Activated CD8-positive, alpha-beta memory T cell treated with anti-CD3 and anti-CD28 coated beads, Interleukin-2, amount 10 ng/mL, durations not matched to agents 7 days and 5 days (primary cell): ENCODE measurements at regions of chr2 and their contacts with region 1.

Region 1: GRCh38 chr2:85642725-85643124 is 25.3 kb downstream of the SFTPB start:
- DNase-seq: peak; percentile 59
- ATAC-seq: peak; percentile 90
- H3K4me3 Mint-ChIP-seq: no peak overlapping the region
- H3K27ac Mint-ChIP-seq: peak overlapping the region; percentile 82
- H3K4me1 Mint-ChIP-seq: peaks cover 23% of the 10 kb centered on the region
- H3K27me3 Mint-ChIP-seq: no peaks in the 10 kb centered on the region

Region 2: DNA sequence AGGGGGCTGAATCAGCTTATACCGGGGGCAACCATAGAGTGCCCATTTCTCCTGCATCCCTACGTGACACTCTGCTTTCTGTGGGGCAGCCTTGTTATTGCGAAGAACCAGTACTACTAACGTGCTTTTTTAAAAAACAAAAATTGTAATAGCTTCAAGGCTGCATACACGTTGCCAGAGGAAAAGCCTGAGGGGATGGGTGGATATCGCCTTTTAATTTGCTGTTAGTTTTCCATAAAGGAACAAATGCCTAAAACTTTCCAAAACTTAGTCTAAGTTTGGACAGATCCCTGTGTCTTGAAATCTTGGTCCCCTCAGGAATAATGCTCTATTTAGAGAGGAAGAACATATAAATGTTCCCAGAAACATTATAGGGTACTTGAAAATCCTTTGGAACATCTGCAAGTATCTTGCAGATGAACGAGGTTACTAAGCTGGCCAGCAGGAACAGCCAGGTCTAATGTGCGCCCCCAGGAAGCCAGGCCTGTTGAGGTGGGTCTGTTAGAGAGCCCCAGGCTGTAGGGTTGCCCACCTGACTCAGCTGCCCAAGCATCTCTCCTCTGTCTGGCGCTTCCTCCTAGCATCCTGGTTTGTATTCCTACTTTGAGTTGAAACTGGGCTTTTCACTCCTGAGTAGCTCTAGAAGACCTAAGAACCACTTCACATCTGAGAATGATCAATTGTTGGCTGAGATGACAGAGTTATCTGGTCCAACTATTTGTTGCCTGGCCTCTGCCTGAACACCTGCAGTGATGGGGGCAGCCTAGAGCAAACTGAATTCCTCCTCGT is 411.9 kb before region 1 on chr2:
- CTCF ChIA-PET with region 1: no interaction called
- DNase-seq: no peak
- ATAC-seq: no peak
- H3K4me3 Mint-ChIP-seq: no peak overlapping the region
- H3K27ac Mint-ChIP-seq: no peak overlapping the region
- H3K4me1 Mint-ChIP-seq: no peaks in the 10 kb centered on the region
- H3K27me3 Mint-ChIP-seq: peaks cover 36% of the 10 kb centered on the region

Region 3: DNA sequence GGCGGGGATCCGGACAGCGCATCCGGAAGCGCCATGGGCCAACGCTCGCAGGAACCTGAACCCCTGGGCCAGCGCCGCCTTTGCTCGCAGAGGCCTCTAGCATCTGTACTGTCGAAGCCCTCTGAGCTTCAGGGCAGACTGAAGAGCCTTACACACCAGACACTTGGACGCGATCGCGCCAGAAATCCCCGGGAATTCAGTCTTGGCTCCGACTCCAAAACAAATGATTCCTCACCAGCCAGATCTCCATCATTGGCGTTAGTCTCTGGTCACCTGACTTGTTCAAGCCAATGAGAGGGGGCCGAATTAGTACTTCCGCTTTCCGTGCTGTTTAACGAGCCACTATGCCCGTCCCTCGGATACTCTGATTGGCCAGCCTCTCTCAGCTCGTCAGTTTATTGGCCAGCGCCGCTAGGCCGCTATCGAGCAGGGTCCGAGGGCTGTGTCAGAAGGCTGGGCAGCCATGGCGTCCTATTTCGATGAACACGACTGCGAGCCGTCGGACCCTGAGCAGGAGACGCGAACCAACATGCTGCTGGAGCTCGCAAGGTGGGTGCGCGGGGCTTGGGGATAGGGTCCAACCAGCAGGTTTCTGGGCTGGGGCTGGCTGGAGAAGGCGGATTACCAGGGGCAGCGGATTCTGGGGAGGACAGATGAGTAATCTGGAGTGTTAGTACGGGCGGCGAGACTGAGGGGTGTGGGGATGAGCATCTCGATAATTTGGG is 47.3 kb before region 1 on chr2 and contains the start of gene RNF181:
- CTCF ChIA-PET with region 1: interaction called, 15 read pairs
- DNase-seq: peak; percentile 97
- ATAC-seq: peak; percentile 99
- H3K4me3 Mint-ChIP-seq: peak within 1 kb of the TSS; percentile 97
- H3K27ac Mint-ChIP-seq: peak within 1 kb of the TSS; percentile 91
- H3K4me1 Mint-ChIP-seq: peaks cover 31% of the 10 kb centered on the region
- H3K27me3 Mint-ChIP-seq: no peaks in the 10 kb centered on the region
- total RNA-seq, gene RNF181: 100 to 110 TPM

Region 4: GRCh38 chr2:85655961-85656417 is 13.3 kb after region 1 on chr2:
- CTCF ChIA-PET with region 1: interaction called, 15 read pairs
- DNase-seq: no peak
- ATAC-seq: no peak
- H3K4me3 Mint-ChIP-seq: no peak overlapping the region
- H3K27ac Mint-ChIP-seq: no peak overlapping the region
- H3K4me1 Mint-ChIP-seq: peaks cover 24% of the 10 kb centered on the region
- H3K27me3 Mint-ChIP-seq: no peaks in the 10 kb centered on the region

Region 5: GRCh38 chr2:85707304-85707703 is 64.6 kb after region 1 on chr2:
- CTCF ChIA-PET with region 1: interaction called, 28 read pairs
- DNase-seq: peak; percentile 85
- ATAC-seq: peak; percentile 82
- H3K4me3 Mint-ChIP-seq: no peak overlapping the region
- H3K27ac Mint-ChIP-seq: peak overlapping the region; percentile 77
- H3K4me1 Mint-ChIP-seq: peaks cover 69% of the 10 kb centered on the region
- H3K27me3 Mint-ChIP-seq: peaks cover 17% of the 10 kb centered on the region

Region 6: GRCh38 chr2:85772019-85772745 is 129.5 kb after region 1 on chr2:
- CTCF ChIA-PET with region 1: no interaction called
- DNase-seq: no peak
- ATAC-seq: no peak
- H3K4me3 Mint-ChIP-seq: no peak overlapping the region
- H3K27ac Mint-ChIP-seq: no peak overlapping the region
- H3K4me1 Mint-ChIP-seq: peaks cover 5% of the 10 kb centered on the region
- H3K27me3 Mint-ChIP-seq: peaks cover 45% of the 10 kb centered on the region

Region 7: GRCh38 chr2:85813982-85814801 is 171.5 kb after region 1 on chr2:
- CTCF ChIA-PET with region 1: interaction called, 15 read pairs
- DNase-seq: peak; percentile 89
- ATAC-seq: peak; percentile 98
- H3K4me3 Mint-ChIP-seq: no peak overlapping the region
- H3K27ac Mint-ChIP-seq: no peak overlapping the region
- H3K4me1 Mint-ChIP-seq: no peaks in the 10 kb centered on the region
- H3K27me3 Mint-ChIP-seq: peaks cover 26% of the 10 kb centered on the region